ENCODE measurements at regions of chr10 and their contacts with region 1.

Region 1: GRCh38 chr10:61733358-61733940 is 70.7 kb downstream of the CABCOCO1 start:
- DNase-seq: peak in 1 of 2 experiments; percentile 71
- H3K4me3 ChIP-seq: no peak overlapping the region
- H3K4me3 Mint-ChIP-seq: no peak overlapping the region
- H3K27ac Mint-ChIP-seq: no peak overlapping the region
- H3K4me1 ChIP-seq: no peaks in the 10 kb centered on the region
- H3K4me1 Mint-ChIP-seq: peaks cover 7% of the 10 kb centered on the region
- H3K27me3 ChIP-seq: no peaks in the 10 kb centered on the region
- H3K27me3 Mint-ChIP-seq: peaks cover 10% of the 10 kb centered on the region
- CTCF ChIP-seq: peak; percentile 80 to 87

Region 2: DNA sequence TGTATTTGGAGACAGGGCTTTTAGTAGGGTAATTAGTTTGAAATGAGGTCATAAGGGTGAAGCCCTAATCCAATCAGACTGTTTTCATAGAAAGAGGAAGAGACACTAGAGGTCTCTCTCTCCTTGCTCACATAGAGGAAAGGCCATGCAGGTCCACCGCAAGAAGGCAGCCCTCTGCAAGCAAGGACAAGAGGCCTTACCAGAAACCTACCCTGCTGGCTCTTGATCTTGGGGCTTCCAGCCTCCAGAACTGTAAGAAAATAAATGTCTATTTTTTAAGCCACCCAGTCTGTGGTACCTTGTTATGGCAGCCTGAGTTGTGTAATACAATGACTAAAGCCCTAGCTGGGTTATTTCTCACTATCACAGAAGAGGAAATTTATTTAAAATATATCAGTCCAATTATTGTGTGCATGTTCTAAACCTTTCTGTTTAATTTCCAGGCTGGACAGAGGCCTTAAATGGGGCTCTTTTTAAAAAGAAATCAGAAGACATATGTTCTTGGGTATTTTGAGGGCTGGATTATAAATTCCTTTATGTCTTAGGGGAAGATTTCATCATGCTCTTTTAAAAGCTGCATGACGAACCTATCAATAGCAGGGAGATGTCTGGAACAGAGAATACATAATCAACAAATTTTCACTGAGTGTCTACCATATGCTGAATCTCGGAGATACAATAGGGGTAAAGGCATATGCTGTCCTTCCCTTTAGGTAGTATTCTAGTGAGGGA is 267.4 kb before region 1 on chr10:
- CTCF ChIA-PET with region 1: no interaction called
- POLR2A ChIA-PET with region 1: no interaction called
- intact Hi-C with region 1: loop called (anchors 1 kb)
- DNase-seq: peak in 1 of 2 experiments; percentile 39
- H3K4me3 ChIP-seq: no peak overlapping the region
- H3K4me3 Mint-ChIP-seq: no peak overlapping the region
- H3K27ac Mint-ChIP-seq: no peak overlapping the region
- H3K4me1 ChIP-seq: no peaks in the 10 kb centered on the region
- H3K4me1 Mint-ChIP-seq: no peaks in the 10 kb centered on the region
- H3K27me3 ChIP-seq: no peaks in the 10 kb centered on the region
- H3K27me3 Mint-ChIP-seq: peaks cover 3% of the 10 kb centered on the region
- CTCF ChIP-seq: peak in 1 of 2 experiments; percentile 23

Region 3: GRCh38 chr10:61606951-61607907 is 126.2 kb before region 1 on chr10:
- CTCF ChIA-PET with region 1: interaction called, 7 read pairs
- POLR2A ChIA-PET with region 1: no interaction called
- intact Hi-C with region 1: loop called (anchors 1 kb)
- DNase-seq: no peak
- H3K4me3 ChIP-seq: no peak overlapping the region
- H3K4me3 Mint-ChIP-seq: no peak overlapping the region
- H3K27ac Mint-ChIP-seq: no peak overlapping the region
- H3K4me1 ChIP-seq: no peaks in the 10 kb centered on the region
- H3K4me1 Mint-ChIP-seq: no peaks in the 10 kb centered on the region
- H3K27me3 ChIP-seq: no peaks in the 10 kb centered on the region
- H3K27me3 Mint-ChIP-seq: peaks cover 30% of the 10 kb centered on the region
- CTCF ChIP-seq: peak; percentile 80 to 88

Measured in Caco-2 (cell line).